Breast epithelium (tissue), 4 donors: ENCODE measurements at regions of chr19 and their contacts with region 1.

Region 1: GRCh38 chr19:51535535-51535934 is 4.1 kb upstream of the SIGLEC6 start:
- DNase-seq: no peak
- H3K4me3 ChIP-seq: no peak overlapping the region
- H3K27ac ChIP-seq: no peak overlapping the region
- H3K4me1 ChIP-seq: no peaks in the 10 kb centered on the region
- H3K27me3 ChIP-seq: peaks cover 0 to 53% of the 10 kb centered on the region in 2 donors
- CTCF ChIP-seq: no peak
- POLR2A ChIP-seq: no peak

Region 2: GRCh38 chr19:49766007-49766937 is 1769.3 kb before region 1 on chr19:
- intact Hi-C with region 1: no loop called
- DNase-seq: peak; percentile 100
- H3K4me3 ChIP-seq: peak overlapping the region; percentile 82 to 96 (median 93)
- H3K27ac ChIP-seq: peak overlapping the region; percentile 93 to 94
- H3K4me1 ChIP-seq: peaks cover 6 to 14% of the 10 kb centered on the region in 2 donors
- H3K27me3 ChIP-seq: no peaks in the 10 kb centered on the region
- CTCF ChIP-seq: peak in 2 of 3 donors; percentile 13 to 23
- POLR2A ChIP-seq: peak; percentile 61

Region 3: GRCh38 chr19:53431399-53432087 is 1896.0 kb after region 1 on chr19 and contains the start of gene ZNF761:
- intact Hi-C with region 1: loop called (anchors 5 kb)
- DNase-seq: peak; percentile 96 to 98
- H3K4me3 ChIP-seq: peak within 1 kb of the TSS; percentile 61 to 78 (median 71)
- H3K27ac ChIP-seq: peak within 1 kb of the TSS; percentile 85 to 89
- H3K4me1 ChIP-seq: no peaks in the 10 kb centered on the region
- H3K27me3 ChIP-seq: no peaks in the 10 kb centered on the region
- CTCF ChIP-seq: peak in 2 of 3 donors; percentile 38 to 42
- POLR2A ChIP-seq: peak; percentile 59
- total RNA-seq, gene ZNF761: 14.1 to 20.9 (median 17.0) TPM